SK-N-SH (cell line): ENCODE measurements at regions of chr9 and their contacts with region 1.

Region 1: DNA sequence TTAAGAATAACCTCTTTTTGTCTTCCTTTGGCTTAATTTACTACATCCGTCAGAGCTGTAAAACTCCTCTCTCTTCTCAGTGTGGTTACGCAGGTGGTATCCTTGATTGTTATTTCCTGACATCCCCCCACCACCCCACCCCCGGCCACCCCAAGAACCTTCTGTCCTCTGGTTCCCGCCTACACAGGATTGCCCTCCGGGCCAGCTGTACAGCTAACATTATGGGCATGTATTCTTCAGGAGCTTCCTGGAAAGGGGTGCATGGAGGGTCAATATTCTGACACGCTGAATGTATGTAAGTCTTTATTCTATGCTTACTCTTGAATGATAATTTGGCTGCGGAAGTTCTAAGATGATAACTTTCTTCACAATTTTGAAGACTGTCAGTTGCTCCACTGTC is 13.0 kb upstream of the ANP32B start:
- DNase-seq: no peak
- H3K4me3 ChIP-seq: no peak overlapping the region
- H3K27ac ChIP-seq: no peak overlapping the region
- H3K4me1 ChIP-seq: no peaks in the 10 kb centered on the region
- H3K27me3 ChIP-seq: peaks cover 25% of the 10 kb centered on the region; the same call in 1 of the 2 replicates
- CTCF ChIP-seq: no peak
- EP300 ChIP-seq: no peak
- RAD21 ChIP-seq: no peak

Region 2: DNA sequence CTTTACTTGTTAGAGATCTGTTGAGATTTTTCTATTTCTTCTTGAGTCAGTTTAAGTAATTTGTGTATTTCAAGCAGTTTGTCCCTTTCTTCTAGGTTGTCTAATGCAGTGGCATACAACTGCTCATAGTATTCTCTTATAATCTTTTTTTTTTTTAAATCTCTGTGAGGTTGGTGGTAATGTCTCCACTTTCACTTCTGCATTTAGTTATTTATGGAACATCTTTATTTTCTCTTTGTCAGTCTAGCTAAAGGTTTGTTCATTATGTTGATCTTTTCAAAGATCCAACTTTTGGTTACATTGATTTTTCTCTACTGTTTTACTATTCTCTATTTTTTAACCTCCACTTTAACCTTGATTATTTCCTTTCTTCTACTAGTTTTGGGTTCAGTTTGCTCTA is 103.3 kb before region 1 on chr9:
- CTCF ChIA-PET with region 1: no interaction called
- POLR2A ChIA-PET with region 1: no interaction called
- DNase-seq: no peak
- H3K4me3 ChIP-seq: no peak overlapping the region
- H3K27ac ChIP-seq: no peak overlapping the region
- H3K4me1 ChIP-seq: no peaks in the 10 kb centered on the region
- H3K27me3 ChIP-seq: peaks cover 5% of the 10 kb centered on the region; the same call in 1 of the 2 replicates
- CTCF ChIP-seq: no peak
- EP300 ChIP-seq: no peak
- RAD21 ChIP-seq: no peak

Region 3: GRCh38 chr9:97982683-97983588 is 12.8 kb after region 1 on chr9 and contains the start of gene ANP32B:
- CTCF ChIA-PET with region 1: interaction called, 12 read pairs
- POLR2A ChIA-PET with region 1: no interaction called
- DNase-seq: peak; percentile 92
- H3K4me3 ChIP-seq: peak within 1 kb of the TSS; percentile 91 to 98
- H3K27ac ChIP-seq: peak within 1 kb of the TSS; percentile 89 to 96
- H3K4me1 ChIP-seq: peaks cover 4 to 32% of the 10 kb centered on the region in 2 experiments; a peak in 2 of 4 replicates
- H3K27me3 ChIP-seq: no peaks in the 10 kb centered on the region
- CTCF ChIP-seq: peak; percentile 65
- EP300 ChIP-seq: no peak
- RAD21 ChIP-seq: peak; percentile 31
- polyA plus RNA-seq, gene ANP32B: 21.6 and 28.4 TPM in 2 replicates